ENCODE measurements at regions of chr16 and their contacts with region 1.

Region 1: DNA sequence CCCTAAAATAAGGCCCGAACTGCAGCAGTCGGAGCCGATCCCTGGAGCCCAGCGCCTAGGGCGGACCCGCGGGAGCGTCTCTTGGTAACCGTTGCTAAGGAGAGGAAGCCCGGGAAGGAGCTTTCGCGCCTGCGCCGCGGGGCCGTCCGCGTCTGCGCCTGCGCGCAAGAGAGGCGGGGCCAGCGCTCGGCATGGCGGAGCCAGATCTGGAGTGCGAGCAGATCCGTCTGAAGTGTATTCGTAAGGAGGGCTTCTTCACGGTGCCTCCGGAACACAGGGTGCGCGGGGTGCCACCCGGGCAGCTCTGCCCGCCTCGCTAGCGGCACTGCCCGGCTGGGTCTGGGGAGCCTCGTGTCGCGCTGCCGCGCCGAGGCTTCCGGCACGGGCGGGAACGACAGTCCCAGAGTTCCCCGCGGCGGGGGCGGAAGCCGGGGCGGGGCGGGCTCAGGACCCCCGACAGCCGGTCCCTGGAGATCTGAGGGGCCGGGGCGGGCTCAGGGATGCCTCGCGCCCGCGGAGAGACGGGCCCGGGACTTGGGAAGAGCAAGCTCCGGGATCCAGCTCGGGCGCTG is at the start of gene CDK10:
- DNase-seq: peak; percentile 71
- H3K4me3 ChIP-seq: peak within 1 kb of the TSS; percentile 80
- CTCF ChIP-seq: no peak

Region 2: GRCh38 chr16:89289428-89290395 is 396.9 kb before region 1 on chr16:
- in situ Hi-C with region 1: loop called (anchors 25 kb)
- DNase-seq: peak; percentile 41
- H3K4me3 ChIP-seq: no peak overlapping the region
- CTCF ChIP-seq: peak; percentile 92

Region 3: DNA sequence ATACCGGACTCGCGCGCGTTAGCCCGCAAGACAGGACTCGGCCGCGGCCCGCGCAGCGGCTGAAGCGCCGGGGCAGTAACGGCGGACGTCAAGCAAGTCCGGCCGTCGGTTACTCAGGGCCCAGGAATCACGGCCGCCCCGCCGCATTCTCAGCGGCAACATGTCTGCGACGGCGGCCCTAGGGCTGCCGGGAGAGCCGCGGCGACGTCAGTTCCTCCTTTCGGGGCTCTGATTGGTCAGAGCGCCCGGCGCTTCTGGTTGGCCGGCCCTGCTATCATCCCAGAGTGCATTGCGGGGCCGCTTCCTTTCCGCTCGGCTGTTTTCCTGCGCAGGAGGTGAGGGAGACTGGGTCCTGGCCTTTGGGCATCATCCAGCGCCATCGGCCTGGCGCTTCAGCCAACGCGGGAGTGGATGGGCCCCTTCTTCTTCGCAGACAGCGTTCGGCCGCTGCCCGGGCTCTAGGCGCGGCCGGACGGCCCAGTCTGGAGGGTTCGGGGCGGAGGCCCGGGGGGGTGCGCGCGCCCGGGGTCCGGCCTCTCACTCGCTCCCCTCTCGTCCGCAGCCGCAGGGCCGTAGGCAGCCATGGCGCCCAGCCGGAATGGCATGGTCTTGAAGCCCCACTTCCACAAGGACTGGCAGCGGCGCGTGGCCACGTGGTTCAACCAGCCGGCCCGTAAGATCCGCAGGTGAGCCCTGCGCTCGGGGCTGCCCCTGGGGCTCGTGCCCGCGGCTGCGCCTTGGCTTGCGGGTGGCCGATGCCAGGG is 126.0 kb before region 1 on chr16 and contains the start of gene RPL13:
- in situ Hi-C with region 1: loop called (anchors 5 kb)
- DNase-seq: peak; percentile 82
- H3K4me3 ChIP-seq: peak within 1 kb of the TSS; percentile 88
- CTCF ChIP-seq: no peak

Measured in astrocyte of the cerebellum (primary cell).